Activated naive CD4-positive, alpha-beta T cell treated with anti-CD3 and anti-CD28 coated beads for 36 hours (primary cell): ENCODE measurements at regions of chr14 and their contacts with region 1.

Region 1: DNA sequence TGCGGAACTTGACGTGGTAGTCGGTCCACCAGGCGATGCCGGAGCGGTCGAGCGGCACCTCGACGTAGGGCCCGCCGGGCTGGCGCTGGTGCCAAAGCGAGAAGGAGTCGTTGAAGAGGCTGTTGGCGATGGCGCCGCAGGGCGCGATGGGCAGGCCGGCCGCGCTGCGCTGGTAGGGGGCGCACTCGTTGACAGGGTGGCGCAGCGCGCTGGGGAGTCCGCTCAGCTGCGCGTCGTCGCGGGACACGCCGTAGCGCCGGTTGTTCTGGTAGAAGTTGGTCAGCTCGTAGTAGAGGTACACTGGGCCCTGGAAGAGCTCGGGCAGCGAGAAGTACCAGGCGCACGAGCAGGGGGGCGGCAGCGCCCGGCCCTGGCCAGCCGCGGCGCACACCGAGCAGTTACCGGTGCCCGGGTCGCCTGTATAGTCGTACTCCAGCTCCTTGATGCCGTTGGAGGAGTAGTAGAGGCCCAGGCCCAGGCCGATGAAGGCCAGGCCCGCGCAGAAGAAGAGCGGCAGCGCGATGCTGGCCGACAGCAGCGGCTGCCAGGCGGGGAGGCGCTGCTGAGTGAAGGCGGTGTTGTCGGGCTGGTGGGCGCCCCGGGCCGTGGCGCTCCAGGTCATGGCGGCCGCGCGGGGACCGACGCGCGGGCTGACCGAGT is 482 bp downstream of the TMEM30B start:
- DNase-seq: peak; percentile 81
- H3K4me3 Mint-ChIP-seq: peak overlapping the region; percentile 88
- H3K27ac Mint-ChIP-seq: peak overlapping the region; percentile 67
- H3K4me1 Mint-ChIP-seq: peaks cover 29% of the 10 kb centered on the region
- H3K27me3 Mint-ChIP-seq: no peaks in the 10 kb centered on the region

Region 2: DNA sequence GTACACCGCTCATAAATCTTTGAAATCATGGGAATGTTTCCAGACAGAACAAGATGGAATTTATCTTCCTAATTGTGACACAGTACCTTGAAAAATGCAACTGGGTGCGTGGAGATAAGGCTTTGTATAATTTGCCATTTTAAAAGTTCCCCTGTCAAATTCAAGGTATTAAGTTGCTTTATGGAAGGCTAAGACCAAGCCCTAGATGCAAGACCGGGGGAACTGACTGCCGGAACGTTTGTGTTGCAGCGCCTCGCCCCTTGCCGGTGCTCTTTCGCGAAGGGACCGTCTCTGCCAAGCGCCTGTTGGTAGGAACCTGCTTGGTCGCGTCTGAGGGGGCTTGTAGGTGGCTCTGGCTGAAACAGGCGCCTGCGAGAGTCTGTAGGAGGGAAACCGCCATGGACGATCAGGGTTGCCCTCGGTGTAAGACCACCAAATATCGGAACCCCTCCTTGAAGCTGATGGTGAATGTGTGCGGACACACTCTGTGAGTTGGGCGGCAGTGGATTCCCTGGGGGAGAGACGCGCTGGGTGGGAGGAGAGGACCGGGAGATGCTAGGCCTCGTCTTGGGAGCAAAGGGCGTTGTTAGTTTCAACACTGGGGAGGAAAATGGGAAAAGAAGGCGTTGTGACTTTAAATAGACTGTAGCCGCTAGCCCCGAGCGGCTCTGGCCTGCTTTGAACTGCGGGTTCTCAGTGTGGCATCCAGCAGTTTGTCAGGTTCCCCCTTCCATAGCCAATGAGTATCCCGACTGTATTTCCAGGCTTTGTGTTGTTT is 546.0 kb before region 1 on chr14 and contains the start of gene MNAT1:
- CTCF ChIA-PET with region 1: no interaction called
- intact Hi-C with region 1: loop called (anchors 10 kb)
- DNase-seq: peak; percentile 83
- H3K4me3 Mint-ChIP-seq: peak within 1 kb of the TSS; percentile 97
- H3K27ac Mint-ChIP-seq: peak within 1 kb of the TSS; percentile 86
- H3K4me1 Mint-ChIP-seq: peaks cover 17% of the 10 kb centered on the region
- H3K27me3 Mint-ChIP-seq: peaks cover 10% of the 10 kb centered on the region
- total RNA-seq, gene MNAT1: 44.0 to 44.2 TPM

Region 3: DNA sequence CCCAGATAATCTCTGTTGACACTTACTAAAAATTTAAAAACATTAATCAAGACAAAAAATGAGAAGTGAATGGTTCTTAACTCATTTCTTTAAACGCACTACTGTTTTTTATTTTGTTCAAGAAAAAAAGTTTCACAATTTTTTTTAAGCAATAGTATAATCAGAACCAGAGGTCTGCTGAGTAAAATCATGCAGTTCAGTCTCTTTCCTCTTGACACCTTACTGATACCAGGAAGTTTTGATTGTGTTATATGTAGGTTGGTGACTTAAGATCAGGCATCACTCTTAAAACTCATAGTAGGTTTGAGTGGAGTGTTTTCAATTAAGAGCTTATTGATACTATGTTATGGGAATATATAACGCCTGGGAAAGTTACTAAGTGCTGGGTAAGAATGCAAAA is 421.1 kb before region 1 on chr14:
- CTCF ChIA-PET with region 1: no interaction called
- intact Hi-C with region 1: no loop called
- DNase-seq: no peak
- H3K4me3 Mint-ChIP-seq: no peak overlapping the region
- H3K27ac Mint-ChIP-seq: no peak overlapping the region
- H3K4me1 Mint-ChIP-seq: peaks cover 14% of the 10 kb centered on the region
- H3K27me3 Mint-ChIP-seq: no peaks in the 10 kb centered on the region

Region 4: GRCh38 chr14:61269321-61270083 is 11.2 kb before region 1 on chr14:
- CTCF ChIA-PET with region 1: interaction called, 44 read pairs
- intact Hi-C with region 1: loop called (anchors 1 kb)
- DNase-seq: peak; percentile 91
- H3K4me3 Mint-ChIP-seq: peak overlapping the region; percentile 67
- H3K27ac Mint-ChIP-seq: no peak overlapping the region
- H3K4me1 Mint-ChIP-seq: no peaks in the 10 kb centered on the region
- H3K27me3 Mint-ChIP-seq: peaks cover 10% of the 10 kb centered on the region

Region 5: DNA sequence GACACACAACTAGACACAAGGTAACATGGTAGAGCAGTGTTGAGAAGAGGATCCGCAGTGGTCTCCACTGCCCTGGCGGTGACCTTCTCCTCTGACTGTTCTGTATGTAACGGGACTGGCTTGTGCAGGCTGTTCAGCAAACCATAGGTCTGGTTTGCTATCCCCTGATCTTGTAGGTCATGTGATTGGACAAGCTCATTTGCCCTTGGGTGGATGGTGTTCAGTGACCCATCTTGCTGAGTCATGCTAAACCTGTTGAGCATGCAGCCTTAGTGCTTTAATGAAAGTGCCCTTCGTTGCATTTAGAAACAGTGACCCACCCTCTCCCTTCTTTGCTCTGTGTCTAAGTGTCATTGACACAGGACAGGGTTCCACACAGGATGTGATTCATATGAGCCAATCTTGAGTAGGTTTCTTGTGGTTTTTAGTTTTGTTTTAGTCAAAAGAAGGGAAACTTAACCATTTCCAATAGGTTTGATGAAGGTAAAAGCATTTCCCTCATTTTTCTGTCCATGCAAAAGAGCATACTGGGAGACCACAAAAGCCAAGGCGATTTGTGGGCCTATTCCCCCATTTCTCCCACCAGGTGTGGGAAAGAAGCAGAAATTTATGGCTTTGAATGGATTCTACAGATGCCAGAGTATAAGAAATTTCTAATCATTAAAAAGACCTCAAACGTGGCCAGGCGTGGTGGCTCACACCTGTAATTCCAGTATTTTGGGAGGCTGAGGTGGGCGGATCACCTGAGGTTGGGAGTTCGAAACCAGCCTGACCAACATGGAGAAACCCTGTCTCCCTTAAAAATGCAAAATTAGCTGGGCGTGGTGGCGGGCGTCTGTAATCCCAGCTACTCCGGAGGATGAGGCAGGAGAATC is 382.0 kb after region 1 on chr14:
- CTCF ChIA-PET with region 1: no interaction called
- intact Hi-C with region 1: no loop called
- DNase-seq: peak; percentile 79
- H3K4me3 Mint-ChIP-seq: peak overlapping the region; percentile 63
- H3K27ac Mint-ChIP-seq: peak overlapping the region; percentile 98
- H3K4me1 Mint-ChIP-seq: peaks cover 69% of the 10 kb centered on the region
- H3K27me3 Mint-ChIP-seq: no peaks in the 10 kb centered on the region